ENCODE measurements at regions of chr16 and their contacts with region 1.

Region 1: DNA sequence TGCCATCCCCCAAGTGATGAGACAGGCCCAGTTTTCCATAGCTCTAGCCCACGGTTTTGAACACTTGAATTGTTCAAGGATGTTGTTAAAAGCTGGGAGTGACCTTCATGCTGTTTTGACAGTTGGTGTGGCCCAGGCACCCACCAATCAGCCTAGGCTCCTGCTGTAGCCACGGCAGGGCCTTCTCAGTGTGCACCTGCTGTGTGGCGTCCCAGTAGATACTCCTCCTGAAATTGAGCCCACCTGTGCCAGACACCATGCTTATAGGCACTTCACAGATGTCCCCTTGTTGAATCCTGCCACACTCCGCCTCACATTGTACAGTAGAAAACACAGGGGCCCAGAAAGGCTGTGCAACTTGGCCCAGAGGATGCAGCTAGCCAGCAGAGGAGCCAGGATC is 86.4 kb downstream of the SOCS1 start:
- DNase-seq: peak in 1 of 2 experiments; percentile 13
- H3K4me3 ChIP-seq: no peak overlapping the region
- H3K27ac ChIP-seq: no peak overlapping the region
- H3K4me1 ChIP-seq: peaks cover 8% of the 10 kb centered on the region
- H3K27me3 ChIP-seq: no peaks in the 10 kb centered on the region
- CTCF ChIP-seq: no peak

Region 2: DNA sequence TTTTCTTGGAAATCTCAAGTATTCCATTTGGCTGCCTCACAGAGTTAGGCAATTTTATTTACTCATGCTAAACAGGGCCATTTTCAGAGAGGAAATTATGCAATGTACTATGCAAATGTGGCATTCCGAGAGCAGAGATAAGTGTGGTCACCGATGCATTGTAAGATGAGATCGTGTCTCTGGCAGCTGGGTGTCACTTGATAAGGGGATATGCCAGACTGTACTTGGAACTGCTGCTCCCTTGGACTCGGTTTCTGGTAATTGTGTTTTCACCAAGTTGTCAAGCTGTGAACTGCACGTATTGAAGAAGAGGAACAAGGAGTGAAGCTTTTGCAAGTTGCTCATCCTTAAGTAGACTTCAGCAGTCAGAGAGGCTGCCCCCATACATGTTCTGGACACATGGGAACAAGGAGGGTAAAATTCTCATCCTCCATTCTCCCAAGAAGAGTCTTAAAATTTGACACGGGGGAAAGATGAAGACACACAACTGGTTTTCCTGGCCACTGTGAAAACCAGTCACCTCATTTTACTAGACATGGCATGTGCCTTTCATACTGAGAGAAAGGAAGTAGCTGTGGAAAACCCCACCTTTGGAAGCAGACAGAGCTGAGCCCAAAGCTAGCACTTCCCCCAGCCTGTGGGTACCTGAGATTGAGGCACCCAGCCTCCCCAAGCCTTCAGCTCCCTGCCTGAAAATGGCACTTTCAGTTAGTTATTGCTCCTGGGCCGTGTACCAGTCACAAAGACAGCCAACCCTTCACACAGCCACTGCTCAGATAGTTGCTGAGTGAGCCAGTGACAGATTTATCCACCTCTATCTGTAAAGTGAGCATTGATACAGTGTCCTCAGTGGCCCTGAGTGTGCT is 64.4 kb before region 1 on chr16:
- CTCF ChIA-PET with region 1: no interaction called
- POLR2A ChIA-PET with region 1: interaction called, 11 read pairs
- intact Hi-C with region 1: no loop called
- DNase-seq: peak in 1 of 2 experiments; percentile 81
- H3K4me3 ChIP-seq: no peak overlapping the region
- H3K27ac ChIP-seq: no peak overlapping the region
- H3K4me1 ChIP-seq: peaks cover 17% of the 10 kb centered on the region
- H3K27me3 ChIP-seq: no peaks in the 10 kb centered on the region
- CTCF ChIP-seq: no peak

Region 3: DNA sequence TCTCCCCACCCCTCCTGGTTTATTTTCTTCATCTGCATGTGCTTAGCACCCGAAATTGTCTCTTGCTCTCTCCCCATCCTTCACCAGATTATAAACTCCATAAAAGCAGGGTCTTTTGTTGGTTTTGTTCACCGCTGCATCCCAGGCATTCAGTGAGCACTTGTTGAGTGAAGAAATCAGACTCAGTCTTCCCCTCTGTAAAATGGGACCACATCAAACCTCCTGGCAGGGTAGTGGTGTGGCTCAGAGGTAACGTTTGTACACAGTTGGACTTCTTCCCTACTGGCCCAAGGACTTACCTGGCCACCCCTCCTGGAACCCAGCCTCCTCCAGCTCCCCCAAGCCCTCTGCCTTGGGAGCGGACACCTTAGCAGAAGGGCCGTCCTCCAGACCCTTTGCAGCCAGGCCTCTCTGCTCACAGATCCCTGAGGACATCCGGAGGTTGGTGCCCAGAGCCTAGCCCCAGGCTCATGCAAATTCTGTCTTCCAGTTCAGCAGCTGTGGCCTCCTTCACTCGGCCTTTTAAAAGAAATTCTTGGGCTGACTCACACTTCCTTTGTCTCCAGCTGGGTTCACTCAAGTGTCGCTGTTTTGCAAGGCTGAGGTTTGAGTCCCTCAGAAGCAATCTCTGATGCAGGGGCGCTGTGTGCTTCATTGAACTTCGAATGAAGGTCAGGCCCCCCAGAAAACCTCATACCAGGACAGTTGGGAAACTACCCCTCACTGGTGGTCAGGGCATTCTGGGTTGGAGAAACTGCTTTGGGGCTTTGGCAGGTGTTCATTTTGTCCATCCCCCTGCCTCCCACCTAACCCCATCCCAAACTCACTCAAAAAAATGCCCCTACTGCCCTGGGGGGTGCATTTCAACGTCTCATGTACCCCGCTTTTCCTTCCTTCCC is 158.8 kb after region 1 on chr16:
- CTCF ChIA-PET with region 1: no interaction called
- POLR2A ChIA-PET with region 1: no interaction called
- intact Hi-C with region 1: no loop called
- DNase-seq: peak; percentile 78 to 89
- H3K4me3 ChIP-seq: peak overlapping the region; percentile 21; the same call in 1 of the 2 replicates
- H3K27ac ChIP-seq: no peak overlapping the region
- H3K4me1 ChIP-seq: peaks cover 15% of the 10 kb centered on the region
- H3K27me3 ChIP-seq: no peaks in the 10 kb centered on the region
- CTCF ChIP-seq: no peak